ENCODE measurements at regions of chr5 and their contacts with region 1.

Region 1: DNA sequence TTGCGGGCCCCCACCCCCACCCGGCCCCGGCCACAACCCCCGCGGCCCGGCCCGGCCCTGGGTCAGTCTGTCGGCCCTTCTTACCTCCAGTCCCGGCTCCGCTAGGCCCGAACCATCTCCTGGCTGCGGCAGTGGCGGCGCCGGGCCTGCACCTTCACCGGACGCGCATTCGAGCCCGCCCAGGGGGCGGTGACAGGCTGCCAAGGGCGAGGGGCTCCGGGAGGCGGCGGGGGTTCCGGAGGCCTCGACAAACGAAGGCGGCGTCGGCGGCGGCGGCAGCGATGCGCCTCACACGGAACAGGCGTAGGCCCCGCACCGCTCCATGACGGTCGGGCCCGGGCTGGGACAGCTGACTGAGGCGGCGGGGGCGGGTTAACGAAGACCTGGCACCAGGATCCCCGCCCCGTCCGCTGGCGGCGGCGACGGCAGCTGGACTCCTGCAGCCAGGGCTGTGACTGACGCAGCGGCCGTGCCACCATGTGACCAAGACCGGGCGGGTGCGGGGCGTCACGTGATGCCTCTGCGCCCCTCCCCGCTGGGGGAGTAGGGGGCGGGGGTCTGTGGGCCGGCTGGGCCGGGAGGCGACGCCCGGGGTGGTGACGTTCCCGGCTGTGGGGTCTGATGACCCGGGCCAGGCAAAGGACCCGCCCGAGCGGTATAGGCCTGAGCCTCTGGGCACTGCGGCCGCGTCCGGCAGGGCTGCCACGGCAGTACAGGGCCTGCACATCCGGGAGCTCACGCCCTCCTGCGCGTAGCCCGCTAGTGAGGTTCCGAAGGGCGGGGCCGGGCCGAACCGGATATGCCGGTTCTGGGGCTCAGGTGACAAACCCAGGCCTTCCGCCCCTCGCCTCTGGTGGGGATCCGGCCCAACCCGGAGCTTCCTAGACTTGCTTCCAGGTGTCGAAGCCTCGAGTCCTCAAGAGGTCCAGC is at the start of gene AFF4:
- DNase-seq: peak; percentile 95
- H3K4me3 ChIP-seq: peak within 1 kb of the TSS; percentile 91 to 92
- H3K27ac ChIP-seq: peak within 1 kb of the TSS; percentile 99 to 100
- H3K4me1 ChIP-seq: peaks cover 4% of the 10 kb centered on the region
- H3K27me3 ChIP-seq: no peaks in the 10 kb centered on the region
- CTCF ChIP-seq: peak in 1 of 4 experiments; percentile 24
- POLR2A ChIP-seq: peak; percentile 100
- total RNA-seq, gene AFF4: 57.2 to 105 TPM

Region 2: GRCh38 chr5:132866342-132867045 is 96.9 kb before region 1 on chr5 and contains the starts of genes GDF9 and UQCRQ:
- intact Hi-C with region 1: loop called (anchors 5 kb)
- DNase-seq: peak; percentile 98
- H3K4me3 ChIP-seq: peak within 1 kb of the TSS; percentile 73 to 87
- H3K27ac ChIP-seq: peak within 1 kb of the TSS; percentile 94
- H3K4me1 ChIP-seq: peaks cover 5% of the 10 kb centered on the region
- H3K27me3 ChIP-seq: no peaks in the 10 kb centered on the region
- CTCF ChIP-seq: peak in 3 of 4 experiments; percentile 40 to 61 (median 45)
- POLR2A ChIP-seq: peak; percentile 89
- total RNA-seq, gene GDF9: 0.09 to 3.2 TPM
- total RNA-seq, gene UQCRQ: 201 to 223 TPM

Region 3: GRCh38 chr5:133051580-133052332 is 88.3 kb after region 1 on chr5 and contains the start of gene HSPA4:
- intact Hi-C with region 1: loop called (anchors 2 kb)
- DNase-seq: peak; percentile 98
- H3K4me3 ChIP-seq: peak within 1 kb of the TSS; percentile 94 to 95
- H3K27ac ChIP-seq: peak within 1 kb of the TSS; percentile 100
- H3K4me1 ChIP-seq: peaks cover 3% of the 10 kb centered on the region
- H3K27me3 ChIP-seq: no peaks in the 10 kb centered on the region
- CTCF ChIP-seq: peak in 1 of 4 experiments; percentile 7
- POLR2A ChIP-seq: peak; percentile 95
- total RNA-seq, gene HSPA4: 51.1 to 73.5 TPM

Region 4: DNA sequence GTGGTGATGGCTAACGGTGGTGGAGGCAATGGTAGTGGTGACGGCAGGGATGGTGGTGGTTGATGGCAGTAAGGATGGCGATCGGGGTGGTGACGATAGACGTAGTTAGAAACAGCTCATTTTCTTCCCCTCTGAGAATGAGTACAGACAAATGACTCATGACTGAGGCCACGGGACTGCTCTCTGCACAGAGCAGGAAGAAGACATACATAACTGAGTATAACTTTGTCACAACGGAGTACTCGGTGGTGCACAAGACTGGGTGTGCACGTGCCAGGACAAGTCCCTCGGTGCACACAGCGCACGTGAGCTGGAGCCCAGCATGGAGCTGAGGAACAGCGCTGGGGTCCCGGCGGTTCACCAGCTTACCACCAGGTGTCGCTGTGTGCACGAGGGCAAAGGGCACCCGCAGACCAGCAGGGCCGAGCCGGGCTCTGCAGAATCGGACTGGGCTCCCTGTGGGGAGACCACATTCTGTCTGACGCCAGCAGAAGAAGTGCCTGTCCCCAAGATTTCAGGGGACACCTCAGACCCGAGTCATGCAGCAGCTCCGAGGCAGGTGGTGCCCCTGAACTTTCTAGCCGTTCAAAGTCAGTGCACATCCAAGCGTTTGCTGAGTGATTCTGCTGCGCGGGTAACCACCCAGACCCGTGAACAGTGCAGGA is 460.3 kb after region 1 on chr5:
- intact Hi-C with region 1: no loop called
- DNase-seq: peak; percentile 17
- H3K4me3 ChIP-seq: no peak overlapping the region
- H3K27ac ChIP-seq: peak overlapping the region in 1 of 2 donors; percentile 35
- H3K4me1 ChIP-seq: no peaks in the 10 kb centered on the region
- H3K27me3 ChIP-seq: no peaks in the 10 kb centered on the region
- CTCF ChIP-seq: peak; percentile 79 to 87 (median 84)
- POLR2A ChIP-seq: no peak

Region 5: DNA sequence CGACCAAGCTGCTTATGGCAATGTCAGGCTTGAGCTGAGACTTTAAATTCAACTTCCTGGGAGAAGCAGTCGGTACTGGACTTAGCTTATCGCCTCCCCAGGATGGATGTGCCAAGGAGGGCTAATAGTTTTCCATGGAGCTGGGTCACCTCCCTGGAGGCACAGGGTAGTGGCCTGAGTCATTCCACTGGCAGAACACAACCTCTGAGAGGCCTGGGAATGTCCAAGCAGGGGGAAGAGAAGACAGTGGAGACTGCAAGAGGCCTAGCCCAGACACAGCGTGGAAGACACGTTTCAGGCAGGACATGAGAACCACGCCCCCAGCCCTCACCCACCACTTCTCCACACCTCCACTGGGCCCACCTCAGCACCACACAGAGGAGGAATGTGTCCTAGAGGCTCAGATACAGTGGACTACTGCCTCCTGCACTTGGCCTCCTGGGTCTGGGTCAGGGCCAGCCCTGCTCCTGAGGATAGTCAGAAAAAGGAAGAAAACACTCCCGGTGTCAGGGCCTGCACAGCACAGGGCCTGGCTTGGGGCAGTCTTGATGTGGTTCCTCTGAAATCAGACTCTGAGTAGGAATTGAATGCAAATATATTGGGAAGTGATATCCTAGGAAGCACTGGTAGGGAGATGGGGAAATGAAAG is 477.2 kb after region 1 on chr5:
- intact Hi-C with region 1: no loop called
- DNase-seq: no peak
- H3K4me3 ChIP-seq: no peak overlapping the region
- H3K27ac ChIP-seq: no peak overlapping the region
- H3K4me1 ChIP-seq: no peaks in the 10 kb centered on the region
- H3K27me3 ChIP-seq: no peaks in the 10 kb centered on the region
- CTCF ChIP-seq: no peak
- POLR2A ChIP-seq: no peak

Measured in prostate gland (tissue), 2 donors.